Left lung (tissue), 14 donors: ENCODE measurements at regions of chr1 and their contacts with region 1.

Region 1: DNA sequence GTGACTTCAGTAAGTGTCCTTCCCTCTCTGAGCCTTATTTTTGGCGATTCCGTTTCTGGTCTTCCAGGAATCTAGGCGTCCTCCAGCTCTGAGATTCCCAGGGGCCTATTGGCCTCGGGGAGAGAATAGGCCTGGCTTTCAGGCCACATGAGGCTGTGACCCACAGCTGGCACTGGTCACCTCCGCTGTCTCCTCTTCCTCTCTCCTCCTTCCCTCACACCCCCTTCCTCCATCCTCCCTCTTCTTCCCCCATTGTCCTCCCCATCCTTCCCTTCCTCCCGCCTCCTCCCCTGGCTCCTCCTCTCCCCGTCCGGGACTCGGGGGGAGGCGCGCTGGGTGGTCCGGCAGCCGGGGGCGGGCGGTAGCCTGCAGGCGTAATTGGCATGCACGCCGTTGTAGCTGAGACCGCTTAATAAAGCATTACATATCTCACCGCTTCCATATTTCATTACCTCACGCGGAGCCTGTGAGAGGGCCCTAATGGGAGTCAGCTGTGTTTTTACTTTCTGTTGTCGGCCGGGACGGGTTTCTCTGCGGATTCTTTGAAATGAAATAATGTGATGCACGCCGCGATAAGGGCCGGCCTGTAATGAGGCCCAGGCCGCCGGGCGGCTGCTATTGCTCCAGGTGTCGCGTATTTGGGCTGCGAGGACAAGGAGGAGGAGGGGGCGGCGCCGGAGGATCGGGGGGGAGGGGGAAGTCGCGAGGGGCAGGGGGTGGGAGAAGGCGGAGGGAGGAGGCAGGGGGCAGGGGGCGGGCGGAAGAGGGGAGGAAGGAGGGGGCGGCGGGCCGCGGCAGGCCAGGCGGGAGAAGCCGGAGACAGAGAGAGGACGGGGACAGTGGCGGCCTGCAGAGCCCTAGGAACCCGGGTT is 95.3 kb downstream of the FOXD2 start:
- DNase-seq: peak in 3 of 4 donors; percentile 44 to 88 (median 81)
- ATAC-seq: peak; percentile 56
- H3K4me3 ChIP-seq: peak overlapping the region; percentile 7 to 31
- H3K27ac ChIP-seq: no peak overlapping the region
- H3K4me1 ChIP-seq: peaks cover 3 to 13% of the 10 kb centered on the region in 2 donors
- H3K27me3 ChIP-seq: peaks cover 0 to 43% of the 10 kb centered on the region in 2 donors
- CTCF ChIP-seq: no peak

Region 2: GRCh38 chr1:47478090-47478489 is 55.1 kb before region 1 on chr1:
- intact Hi-C with region 1: no loop called
- DNase-seq: peak; percentile 27 to 80 (median 58)
- ATAC-seq: peak; percentile 95
- H3K4me3 ChIP-seq: no peak overlapping the region
- H3K27ac ChIP-seq: peak overlapping the region; percentile 53 to 57
- H3K4me1 ChIP-seq: peaks cover 9 to 10% of the 10 kb centered on the region in 2 donors
- H3K27me3 ChIP-seq: peaks cover 0 to 8% of the 10 kb centered on the region in 2 donors
- CTCF ChIP-seq: no peak

Region 3: GRCh38 chr1:47696740-47697441 is 163.7 kb after region 1 on chr1:
- intact Hi-C with region 1: loop called in 1 of 2 experiments (anchors 10 kb)
- DNase-seq: peak in 1 of 4 donors; percentile 70
- ATAC-seq: peak; percentile 96
- H3K4me3 ChIP-seq: no peak overlapping the region
- H3K27ac ChIP-seq: no peak overlapping the region
- H3K4me1 ChIP-seq: no peaks in the 10 kb centered on the region
- H3K27me3 ChIP-seq: no peaks in the 10 kb centered on the region
- CTCF ChIP-seq: no peak

Region 4: DNA sequence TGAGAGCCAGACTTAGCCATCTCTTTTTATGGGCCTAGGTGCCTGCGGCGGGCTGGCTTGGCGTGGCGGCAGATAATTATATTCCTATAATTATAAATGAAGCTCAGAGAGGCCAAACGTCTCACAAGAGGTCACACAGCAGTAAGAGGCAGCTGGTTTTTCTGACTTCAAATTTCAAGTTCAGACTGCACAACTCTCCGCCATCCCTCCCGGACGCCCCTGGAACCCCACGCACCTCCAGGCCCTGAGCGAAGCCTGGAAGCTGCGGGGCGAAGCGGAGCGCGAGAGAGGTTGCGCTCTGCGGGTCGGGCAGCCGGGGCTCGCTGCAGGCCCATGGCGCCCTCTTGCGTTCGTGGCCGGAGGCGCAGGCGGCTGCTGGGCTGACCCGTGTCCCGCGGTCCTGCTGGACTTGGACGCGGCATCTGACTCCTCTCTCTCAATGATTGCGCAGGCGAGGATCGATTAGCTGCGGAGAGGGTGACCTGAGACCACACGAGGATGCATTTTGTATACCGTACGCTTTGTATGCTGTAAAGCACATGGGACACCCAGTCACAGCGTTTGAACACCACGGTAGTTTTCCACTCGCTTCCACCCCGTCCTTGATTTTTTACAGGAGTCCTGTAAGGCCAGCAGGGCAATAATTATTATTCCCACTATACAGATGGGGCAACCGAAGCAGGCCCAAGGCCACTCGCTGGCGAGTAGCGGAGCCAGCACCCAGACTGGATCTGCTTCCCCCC is 177.3 kb after region 1 on chr1:
- intact Hi-C with region 1: loop called in 1 of 2 experiments (anchors 5 kb)
- DNase-seq: peak; percentile 62 to 93 (median 71)
- ATAC-seq: peak; percentile 96
- H3K4me3 ChIP-seq: peak overlapping the region in 1 of 2 donors; percentile 29
- H3K27ac ChIP-seq: no peak overlapping the region
- H3K4me1 ChIP-seq: peaks cover 0 to 20% of the 10 kb centered on the region in 2 donors
- H3K27me3 ChIP-seq: peaks cover 37 to 100% of the 10 kb centered on the region in 2 donors
- CTCF ChIP-seq: peak; percentile 98 to 99

Region 5: GRCh38 chr1:47963568-47964358 is 430.6 kb after region 1 on chr1:
- intact Hi-C with region 1: no loop called
- DNase-seq: no peak
- ATAC-seq: peak; percentile 24
- H3K4me3 ChIP-seq: no peak overlapping the region
- H3K27ac ChIP-seq: no peak overlapping the region
- H3K4me1 ChIP-seq: peaks cover 0 to 8% of the 10 kb centered on the region in 2 donors
- H3K27me3 ChIP-seq: no peaks in the 10 kb centered on the region
- CTCF ChIP-seq: no peak